GM10248 (cell line): ENCODE measurements at regions of chr3 and their contacts with region 1.

Region 1: GRCh38 chr3:4290272-4290893 is 12.8 kb upstream of the SETMAR start:
- DNase-seq: peak; percentile 18
- CTCF ChIP-seq: peak; percentile 79

Region 2: GRCh38 chr3:3705090-3705775 is 585.1 kb before region 1 on chr3:
- CTCF ChIA-PET with region 1: no interaction called
- POLR2A ChIA-PET with region 1: no interaction called
- DNase-seq: no peak
- CTCF ChIP-seq: no peak

Region 3: GRCh38 chr3:4149296-4149695 is 141.1 kb before region 1 on chr3:
- CTCF ChIA-PET with region 1: no interaction called
- POLR2A ChIA-PET with region 1: no interaction called
- DNase-seq: no peak
- CTCF ChIP-seq: no peak

Region 4: GRCh38 chr3:4279516-4280105 is 10.8 kb before region 1 on chr3:
- CTCF ChIA-PET with region 1: interaction called, 17 read pairs
- POLR2A ChIA-PET with region 1: no interaction called
- DNase-seq: no peak
- CTCF ChIP-seq: no peak

Region 5: GRCh38 chr3:4303187-4304123 is 13.1 kb after region 1 on chr3 and contains the start of gene SETMAR:
- CTCF ChIA-PET with region 1: interaction called, 14 read pairs
- POLR2A ChIA-PET with region 1: no interaction called
- DNase-seq: peak; percentile 93
- CTCF ChIP-seq: no peak